ENCODE measurements at regions of chr14 and their contacts with region 1.

Region 1: DNA sequence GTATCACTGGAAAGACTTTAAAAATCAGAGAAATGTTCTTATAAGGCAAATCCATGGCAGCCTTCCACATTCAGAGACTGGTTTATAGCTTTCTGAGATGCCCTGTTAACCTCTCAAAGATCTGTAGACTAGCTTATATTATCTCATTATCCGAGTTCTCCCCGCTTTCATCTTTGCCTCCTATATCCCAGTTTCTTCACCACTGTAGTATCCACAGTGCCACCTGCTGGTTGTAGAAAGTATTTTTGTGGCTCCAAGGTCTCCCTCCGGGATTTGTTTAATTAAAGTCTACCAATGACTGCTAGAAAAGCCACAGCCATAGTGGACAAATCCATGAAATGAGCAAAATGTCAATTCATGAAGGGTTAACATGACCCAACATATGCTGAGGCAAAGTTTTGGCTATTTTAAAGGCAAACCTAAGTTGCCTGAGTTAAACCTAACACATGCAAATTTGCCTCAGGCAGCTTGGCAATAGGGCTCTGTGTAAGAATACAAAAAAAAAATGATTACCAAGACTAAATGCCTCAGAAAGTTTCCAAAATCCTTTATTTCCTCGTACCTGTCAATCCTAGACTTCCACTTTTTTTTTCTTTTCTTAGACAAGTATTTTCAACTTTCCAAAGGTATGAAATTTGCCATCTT is 218.8 kb upstream of the BMP4 start:
- DNase-seq: no peak

Region 2: DNA sequence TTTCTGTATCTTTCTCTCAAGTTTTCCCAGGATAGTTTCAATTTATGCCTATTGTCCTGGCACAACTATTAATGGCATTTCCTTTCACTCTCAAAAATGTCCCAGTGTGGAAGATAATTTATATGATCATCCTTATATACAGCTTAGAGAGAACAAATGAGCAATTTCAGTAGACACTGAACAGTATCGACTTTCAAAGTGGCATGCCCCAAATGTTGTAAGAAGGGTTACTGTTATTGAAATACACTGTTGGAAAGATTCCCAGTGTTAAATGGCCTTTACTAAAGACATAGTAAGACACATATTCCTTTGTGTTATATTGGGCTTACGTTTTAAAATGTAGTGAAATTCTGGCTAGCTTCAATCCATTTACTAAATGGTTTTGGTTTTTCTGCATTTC is 19.1 kb after region 1 on chr14:
- intact Hi-C with region 1: no loop called
- DNase-seq: no peak

Region 3: DNA sequence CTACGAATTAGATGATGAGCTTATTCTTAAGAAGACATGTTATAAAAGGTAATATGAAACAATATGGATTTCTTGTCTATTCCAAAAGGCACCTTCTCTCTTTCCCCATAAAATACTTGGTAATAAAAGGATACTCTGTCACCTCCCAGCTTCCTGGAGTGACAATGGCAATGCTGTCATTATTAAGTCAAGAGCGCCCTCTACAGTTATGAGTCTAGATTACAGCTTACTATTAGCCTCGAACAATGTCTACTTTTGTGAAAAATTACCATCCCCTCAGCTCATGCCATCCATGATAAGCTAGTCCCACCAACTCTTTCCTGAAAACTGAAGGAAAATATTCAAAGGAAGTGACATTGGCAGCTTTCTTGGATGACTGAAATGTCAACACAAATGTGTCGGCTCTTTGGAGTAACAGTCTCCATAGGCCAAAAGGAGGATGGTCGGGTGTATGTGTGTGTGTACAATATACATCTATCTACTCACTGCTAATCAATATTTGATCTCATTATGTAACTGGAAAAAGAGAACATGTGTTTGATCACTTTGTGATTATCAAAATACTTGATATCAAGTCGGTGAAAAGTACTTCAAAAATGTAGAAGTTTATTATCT is 172.7 kb after region 1 on chr14:
- intact Hi-C with region 1: loop called in 1 of 2 experiments (anchors 10 kb)
- DNase-seq: no peak